ENCODE measurements at regions of chr15 and their contacts with region 1.

Region 1: GRCh38 chr15:42575188-42576039 is at the start of gene STARD9:
- DNase-seq: peak; percentile 89 to 97 (median 93)
- ATAC-seq: peak; percentile 91
- H3K4me3 ChIP-seq: peak within 1 kb of the TSS; percentile 87 to 89
- H3K4me3 Mint-ChIP-seq: peak within 1 kb of the TSS; percentile 93
- H3K27ac ChIP-seq: peak within 1 kb of the TSS; percentile 41 to 57
- H3K27ac Mint-ChIP-seq: peak within 1 kb of the TSS; percentile 74
- H3K4me1 ChIP-seq: peaks cover 16% of the 10 kb centered on the region
- H3K4me1 Mint-ChIP-seq: peaks cover 27% of the 10 kb centered on the region
- H3K27me3 ChIP-seq: no peaks in the 10 kb centered on the region
- H3K27me3 Mint-ChIP-seq: no peaks in the 10 kb centered on the region
- CTCF ChIP-seq: no peak
- total RNA-seq, gene STARD9: 8.5 to 9.0 TPM

Region 2: DNA sequence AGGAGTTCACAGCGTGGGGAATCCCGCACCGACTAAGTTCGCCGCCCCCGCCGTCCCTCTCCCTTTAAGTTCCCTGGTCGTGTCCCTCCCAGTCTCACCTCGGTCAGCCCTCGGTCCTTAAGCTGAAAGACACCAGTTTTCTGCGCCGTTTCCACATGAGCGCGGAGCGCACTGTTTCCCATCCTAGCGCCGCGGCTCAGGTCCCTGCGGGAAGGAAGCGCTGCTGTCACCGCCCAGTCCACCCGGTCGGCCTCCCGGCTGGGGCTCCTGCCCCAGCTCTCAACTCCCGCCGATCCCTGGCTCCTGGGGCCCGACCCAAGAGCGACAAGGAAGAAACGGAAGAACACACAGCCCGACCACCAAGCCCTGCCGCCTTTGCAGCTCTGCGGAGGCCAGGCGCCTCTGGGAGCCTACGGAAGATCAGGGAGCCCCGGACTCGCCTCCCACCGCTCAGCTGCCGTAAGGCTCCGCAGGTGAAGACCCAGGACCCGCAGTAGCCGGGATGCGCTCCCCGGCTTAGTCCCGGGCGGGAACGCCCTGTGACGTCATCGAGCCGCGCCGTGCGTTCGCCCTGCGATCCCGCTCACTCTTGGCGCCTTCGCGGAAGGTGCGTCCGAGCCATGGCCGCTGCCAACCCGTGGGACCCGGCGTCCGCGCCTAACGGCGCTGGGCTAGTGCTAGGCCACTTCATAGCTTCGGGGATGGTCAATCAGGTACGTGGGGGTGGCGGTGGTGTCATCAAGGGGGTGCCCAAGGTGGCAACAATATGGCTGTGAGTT is 27.0 kb before region 1 on chr15 and contains the starts of genes HAUS2 and LRRC57:
- CTCF ChIA-PET with region 1: interaction called, 3 read pairs
- POLR2A ChIA-PET with region 1: interaction called, 13 read pairs
- intact Hi-C with region 1: loop called (anchors 1 kb)
- DNase-seq: peak; percentile 70 to 93 (median 89)
- ATAC-seq: peak; percentile 86
- H3K4me3 ChIP-seq: peak within 1 kb of the TSS; percentile 78 to 90
- H3K4me3 Mint-ChIP-seq: peak within 1 kb of the TSS; percentile 95
- H3K27ac ChIP-seq: peak within 1 kb of the TSS; percentile 82 to 95
- H3K27ac Mint-ChIP-seq: peak within 1 kb of the TSS; percentile 97
- H3K4me1 ChIP-seq: peaks cover 27% of the 10 kb centered on the region
- H3K4me1 Mint-ChIP-seq: peaks cover 46% of the 10 kb centered on the region
- H3K27me3 ChIP-seq: no peaks in the 10 kb centered on the region
- H3K27me3 Mint-ChIP-seq: no peaks in the 10 kb centered on the region
- CTCF ChIP-seq: no peak
- total RNA-seq, gene HAUS2: 33.1 to 39.1 TPM
- total RNA-seq, gene LRRC57: 30.0 to 31.1 TPM

Region 3: DNA sequence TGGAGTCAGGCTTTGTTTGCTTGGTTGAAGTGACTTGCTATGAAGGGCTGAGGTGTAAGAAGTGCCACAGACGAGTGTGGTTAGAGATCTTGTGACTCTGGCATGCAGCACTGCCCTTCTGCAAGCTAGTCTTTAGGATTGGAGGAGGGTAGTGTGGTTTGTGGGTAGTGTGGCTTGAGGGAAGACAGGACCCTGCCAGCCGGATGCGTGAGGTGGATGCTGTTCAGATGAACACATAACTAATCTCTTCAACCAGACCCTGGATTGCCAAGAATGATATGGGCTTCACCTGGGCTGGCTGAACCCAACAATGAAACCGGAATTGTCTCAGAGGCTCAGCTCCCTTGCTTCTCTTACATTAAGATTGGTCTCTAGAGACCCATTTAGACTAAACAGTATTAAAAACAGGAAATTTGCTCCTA is 32.7 kb after region 1 on chr15:
- CTCF ChIA-PET with region 1: interaction called, 3 read pairs
- POLR2A ChIA-PET with region 1: interaction called, 14 read pairs
- intact Hi-C with region 1: loop called in 1 of 2 experiments (anchors 2 kb)
- DNase-seq: peak; percentile 6 to 76 (median 46)
- ATAC-seq: peak; percentile 60
- H3K4me3 ChIP-seq: no peak overlapping the region
- H3K4me3 Mint-ChIP-seq: peak overlapping the region; percentile 71
- H3K27ac ChIP-seq: peak overlapping the region in 1 of 2 experiments; percentile 25
- H3K27ac Mint-ChIP-seq: peak overlapping the region; percentile 68
- H3K4me1 ChIP-seq: peaks cover 43% of the 10 kb centered on the region
- H3K4me1 Mint-ChIP-seq: peaks cover 53% of the 10 kb centered on the region
- H3K27me3 ChIP-seq: no peaks in the 10 kb centered on the region
- H3K27me3 Mint-ChIP-seq: no peaks in the 10 kb centered on the region
- CTCF ChIP-seq: no peak

Region 4: GRCh38 chr15:42650208-42651066 is 75.0 kb after region 1 on chr15:
- CTCF ChIA-PET with region 1: interaction called, 3 read pairs
- POLR2A ChIA-PET with region 1: interaction called, 4 read pairs
- intact Hi-C with region 1: loop called (anchors 1 to 5 kb)
- DNase-seq: peak; percentile 26 to 76 (median 56)
- ATAC-seq: peak; percentile 85
- H3K4me3 ChIP-seq: no peak overlapping the region
- H3K4me3 Mint-ChIP-seq: no peak overlapping the region
- H3K27ac ChIP-seq: no peak overlapping the region
- H3K27ac Mint-ChIP-seq: no peak overlapping the region
- H3K4me1 ChIP-seq: no peaks in the 10 kb centered on the region
- H3K4me1 Mint-ChIP-seq: peaks cover 2% of the 10 kb centered on the region
- H3K27me3 ChIP-seq: no peaks in the 10 kb centered on the region
- H3K27me3 Mint-ChIP-seq: no peaks in the 10 kb centered on the region
- CTCF ChIP-seq: peak; percentile 66

Region 5: DNA sequence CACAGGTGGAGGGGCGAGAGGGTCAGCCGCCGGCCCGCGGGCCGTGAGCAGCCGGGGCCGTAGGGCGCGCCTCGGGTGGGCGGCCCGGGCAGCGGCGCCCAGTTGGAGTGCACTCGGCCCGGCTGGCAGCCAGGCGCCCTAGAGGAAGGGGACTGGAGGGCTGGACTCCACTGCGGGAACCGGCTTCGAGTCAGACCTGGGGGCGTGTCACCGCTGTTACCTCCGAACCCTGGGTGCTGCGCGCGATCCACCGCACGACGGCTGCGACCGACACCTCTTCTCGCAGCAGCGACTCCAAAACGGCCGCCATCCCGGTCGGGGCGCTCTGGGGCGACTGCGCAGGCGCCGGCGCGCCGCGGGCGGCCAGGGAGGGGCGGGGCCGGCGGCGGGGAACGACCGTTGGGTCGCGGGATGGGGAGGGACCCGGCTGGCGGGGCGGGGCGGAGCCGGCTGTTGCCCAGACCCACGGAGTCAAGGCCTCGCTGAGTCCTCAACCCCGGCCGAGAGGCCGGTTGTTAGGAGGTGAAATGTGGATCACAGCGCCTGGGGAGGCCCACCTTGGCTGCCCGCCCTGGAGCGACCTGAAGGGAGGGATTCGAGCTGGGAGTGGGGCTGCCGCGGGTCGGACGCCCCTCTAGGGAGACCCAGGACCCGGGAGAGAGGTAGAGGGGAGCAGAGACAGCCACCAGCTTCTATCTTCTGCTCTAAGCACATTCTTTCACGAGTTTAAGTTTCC is 161.5 kb after region 1 on chr15 and contains the start of gene CDAN1:
- CTCF ChIA-PET with region 1: no interaction called
- POLR2A ChIA-PET with region 1: no interaction called
- intact Hi-C with region 1: loop called (anchors 5 to 10 kb)
- DNase-seq: peak; percentile 88 to 97 (median 93)
- ATAC-seq: peak; percentile 93
- H3K4me3 ChIP-seq: peak within 1 kb of the TSS; percentile 62 to 78
- H3K4me3 Mint-ChIP-seq: peak within 1 kb of the TSS; percentile 80
- H3K27ac ChIP-seq: peak within 1 kb of the TSS; percentile 72 to 80
- H3K27ac Mint-ChIP-seq: peak within 1 kb of the TSS; percentile 78
- H3K4me1 ChIP-seq: peaks cover 14% of the 10 kb centered on the region
- H3K4me1 Mint-ChIP-seq: peaks cover 22% of the 10 kb centered on the region
- H3K27me3 ChIP-seq: no peaks in the 10 kb centered on the region
- H3K27me3 Mint-ChIP-seq: no peaks in the 10 kb centered on the region
- CTCF ChIP-seq: no peak
- total RNA-seq, gene CDAN1: 23.9 to 24.0 TPM

Measured in CD8-positive, alpha-beta T cell (primary cell).